T-cell (primary cell): ENCODE measurements at regions of chr3 and their contacts with region 1.

Region 1: GRCh38 chr3:49093853-49094767 is at the start of gene QRICH1:
- DNase-seq: peak; percentile 91 to 97 (median 95)
- ATAC-seq: peak; percentile 81 to 87 (median 86)
- H3K4me3 ChIP-seq: peak within 1 kb of the TSS; percentile 78 to 99
- H3K4me3 Mint-ChIP-seq: peak within 1 kb of the TSS; percentile 90 to 98 (median 94)
- H3K27ac ChIP-seq: peak within 1 kb of the TSS; percentile 96
- H3K27ac Mint-ChIP-seq: peak within 1 kb of the TSS; percentile 98 to 99
- H3K4me1 ChIP-seq: peaks cover 14 to 37% of the 10 kb centered on the region in 2 experiments
- H3K4me1 Mint-ChIP-seq: peaks cover 40 to 49% (median 44%) of the 10 kb centered on the region in 3 donors
- H3K27me3 ChIP-seq: no peaks in the 10 kb centered on the region
- H3K27me3 Mint-ChIP-seq: no peaks in the 10 kb centered on the region
- total RNA-seq, gene QRICH1: 142 to 202 (median 155) TPM

Region 2: DNA sequence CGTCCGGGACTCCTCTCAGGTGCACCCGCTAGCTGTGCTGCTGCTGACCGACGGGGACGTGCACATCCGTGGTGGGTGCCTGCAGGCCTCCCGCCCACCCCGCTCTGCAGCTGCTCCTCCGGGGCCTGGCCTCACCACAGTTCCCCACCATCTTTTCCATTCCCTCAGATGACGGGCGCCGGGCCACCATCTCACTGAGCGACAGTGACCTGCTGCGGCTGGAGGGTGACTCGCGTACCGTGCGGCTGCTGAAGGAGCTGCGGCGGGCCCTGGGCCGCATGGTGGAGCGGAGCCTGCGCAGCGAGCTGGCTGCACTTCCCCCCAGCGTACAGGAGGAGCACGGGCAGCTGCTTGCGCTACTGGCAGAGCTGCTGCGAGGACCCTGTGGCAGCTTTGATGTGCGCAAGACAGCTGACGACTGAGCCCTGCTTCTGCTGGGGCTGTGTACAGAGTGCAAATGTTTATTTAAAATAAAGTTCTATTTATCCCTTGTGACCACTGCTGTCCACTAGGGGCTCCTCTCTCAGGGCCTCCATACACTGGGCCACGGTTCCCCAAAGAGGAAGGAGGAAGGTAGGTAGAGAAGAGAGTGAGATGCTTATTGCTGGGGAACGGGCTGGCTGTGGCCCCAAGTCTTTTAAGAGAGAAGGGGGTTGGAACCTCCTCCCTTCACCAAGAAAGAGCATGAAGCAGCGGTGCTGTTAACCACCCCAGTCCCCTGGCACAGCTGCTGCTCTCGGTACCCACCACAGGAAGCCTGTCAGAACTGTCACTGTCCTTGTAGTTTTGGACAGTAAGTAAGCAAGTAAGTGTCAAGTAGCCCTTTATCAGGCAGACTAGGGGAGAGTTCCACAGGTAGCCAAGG is 1244.2 kb before region 1 on chr3:
- CTCF ChIA-PET with region 1: no interaction called
- POLR2A ChIA-PET with region 1: no interaction called
- DNase-seq: no peak
- ATAC-seq: peak in 2 of 4 experiments; percentile 25 to 30
- H3K4me3 ChIP-seq: no peak overlapping the region
- H3K4me3 Mint-ChIP-seq: no peak overlapping the region
- H3K27ac ChIP-seq: no peak overlapping the region
- H3K27ac Mint-ChIP-seq: no peak overlapping the region
- H3K4me1 ChIP-seq: no peaks in the 10 kb centered on the region
- H3K4me1 Mint-ChIP-seq: no peaks in the 10 kb centered on the region
- H3K27me3 ChIP-seq: no peaks in the 10 kb centered on the region
- H3K27me3 Mint-ChIP-seq: no peaks in the 10 kb centered on the region

Region 3: GRCh38 chr3:48952510-48953118 is 141.5 kb before region 1 on chr3:
- CTCF ChIA-PET with region 1: no interaction called
- POLR2A ChIA-PET with region 1: no interaction called
- DNase-seq: peak in 34 of 35 experiments; percentile 10 to 72 (median 42)
- ATAC-seq: peak; percentile 69 to 79 (median 75)
- H3K4me3 ChIP-seq: no peak overlapping the region
- H3K4me3 Mint-ChIP-seq: no peak overlapping the region
- H3K27ac ChIP-seq: no peak overlapping the region
- H3K27ac Mint-ChIP-seq: peak overlapping the region in 1 of 2 donors; percentile 23
- H3K4me1 ChIP-seq: no peaks in the 10 kb centered on the region
- H3K4me1 Mint-ChIP-seq: peaks cover 21 to 24% (median 23%) of the 10 kb centered on the region in 3 donors
- H3K27me3 ChIP-seq: no peaks in the 10 kb centered on the region
- H3K27me3 Mint-ChIP-seq: no peaks in the 10 kb centered on the region

Region 4: DNA sequence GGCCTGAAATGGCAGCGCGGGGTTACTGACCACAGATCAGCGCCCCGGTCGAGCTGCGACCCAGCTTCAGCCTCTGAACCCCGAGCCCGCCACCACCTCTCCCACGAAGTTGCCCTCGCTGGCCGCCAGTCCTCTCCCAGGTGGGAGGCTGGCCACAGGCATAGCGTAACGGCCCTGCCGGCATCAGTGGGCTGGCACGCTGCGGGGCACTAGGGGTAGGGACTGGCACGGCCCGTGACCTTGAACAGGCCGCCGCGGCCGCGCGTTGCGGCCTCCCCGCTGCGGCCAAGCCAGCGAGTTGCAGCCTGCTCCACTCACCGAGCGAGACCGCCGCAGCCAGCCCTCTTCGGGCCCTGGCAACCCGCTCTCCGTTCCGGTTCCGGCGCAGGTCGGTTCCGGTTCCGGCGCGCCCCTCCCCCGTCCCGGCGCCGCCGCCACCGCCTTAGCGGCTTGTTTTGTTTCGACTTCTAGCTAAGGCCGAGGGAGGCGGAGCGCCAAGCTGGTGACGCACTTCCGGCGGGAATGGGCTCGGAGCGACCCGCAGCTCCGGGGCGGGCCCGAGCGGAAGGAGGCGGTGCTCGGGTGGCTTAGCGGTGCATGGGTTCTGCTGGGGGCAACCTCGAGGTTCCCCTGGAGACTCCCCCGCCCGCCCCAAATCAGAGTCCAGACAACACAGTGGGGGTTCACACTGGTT is 26.5 kb after region 1 on chr3 and contains the start of gene USP19:
- CTCF ChIA-PET with region 1: interaction called in 1 of 2 experiments, 15 read pairs
- POLR2A ChIA-PET with region 1: interaction called in 1 of 2 experiments, 17 read pairs
- DNase-seq: peak; percentile 85 to 99 (median 94)
- ATAC-seq: peak; percentile 92 to 95 (median 93)
- H3K4me3 ChIP-seq: peak within 1 kb of the TSS; percentile 81 to 95
- H3K4me3 Mint-ChIP-seq: peak within 1 kb of the TSS; percentile 83 to 85 (median 83)
- H3K27ac ChIP-seq: peak within 1 kb of the TSS; percentile 93
- H3K27ac Mint-ChIP-seq: peak within 1 kb of the TSS; percentile 87 to 89
- H3K4me1 ChIP-seq: peaks cover 9 to 42% of the 10 kb centered on the region in 2 experiments
- H3K4me1 Mint-ChIP-seq: peaks cover 14 to 22% (median 22%) of the 10 kb centered on the region in 3 donors
- H3K27me3 ChIP-seq: no peaks in the 10 kb centered on the region
- H3K27me3 Mint-ChIP-seq: no peaks in the 10 kb centered on the region
- total RNA-seq, gene USP19: 56.5 to 117 (median 105) TPM

Region 5: DNA sequence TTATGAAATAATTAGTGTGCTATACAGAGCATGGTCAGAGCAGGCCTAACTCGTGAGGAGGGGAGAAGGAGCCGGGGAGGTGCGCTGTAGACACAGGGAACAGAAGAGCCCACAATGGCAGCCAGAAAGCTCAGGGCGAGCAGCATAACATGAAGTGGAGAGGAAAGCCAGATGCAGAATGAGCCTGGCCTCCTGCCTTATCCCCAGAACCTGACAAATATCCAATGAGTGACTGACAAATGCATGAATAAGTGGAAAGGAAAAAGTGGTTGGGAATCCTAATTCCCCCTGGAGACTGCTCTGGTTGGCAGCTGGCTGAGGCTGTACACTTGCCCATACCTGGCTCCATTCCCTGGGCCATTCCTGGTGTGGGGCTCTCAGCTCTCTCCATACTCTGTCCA is 818.8 kb after region 1 on chr3:
- CTCF ChIA-PET with region 1: no interaction called
- POLR2A ChIA-PET with region 1: no interaction called
- DNase-seq: no peak
- ATAC-seq: no peak
- H3K4me3 ChIP-seq: no peak overlapping the region
- H3K4me3 Mint-ChIP-seq: no peak overlapping the region
- H3K27ac ChIP-seq: no peak overlapping the region
- H3K27ac Mint-ChIP-seq: no peak overlapping the region
- H3K4me1 ChIP-seq: no peaks in the 10 kb centered on the region
- H3K4me1 Mint-ChIP-seq: peaks cover 0 to 2% (median 0%) of the 10 kb centered on the region in 3 donors
- H3K27me3 ChIP-seq: no peaks in the 10 kb centered on the region
- H3K27me3 Mint-ChIP-seq: no peaks in the 10 kb centered on the region